ENCODE measurements at regions of chr12 and their contacts with region 1.

Region 1: DNA sequence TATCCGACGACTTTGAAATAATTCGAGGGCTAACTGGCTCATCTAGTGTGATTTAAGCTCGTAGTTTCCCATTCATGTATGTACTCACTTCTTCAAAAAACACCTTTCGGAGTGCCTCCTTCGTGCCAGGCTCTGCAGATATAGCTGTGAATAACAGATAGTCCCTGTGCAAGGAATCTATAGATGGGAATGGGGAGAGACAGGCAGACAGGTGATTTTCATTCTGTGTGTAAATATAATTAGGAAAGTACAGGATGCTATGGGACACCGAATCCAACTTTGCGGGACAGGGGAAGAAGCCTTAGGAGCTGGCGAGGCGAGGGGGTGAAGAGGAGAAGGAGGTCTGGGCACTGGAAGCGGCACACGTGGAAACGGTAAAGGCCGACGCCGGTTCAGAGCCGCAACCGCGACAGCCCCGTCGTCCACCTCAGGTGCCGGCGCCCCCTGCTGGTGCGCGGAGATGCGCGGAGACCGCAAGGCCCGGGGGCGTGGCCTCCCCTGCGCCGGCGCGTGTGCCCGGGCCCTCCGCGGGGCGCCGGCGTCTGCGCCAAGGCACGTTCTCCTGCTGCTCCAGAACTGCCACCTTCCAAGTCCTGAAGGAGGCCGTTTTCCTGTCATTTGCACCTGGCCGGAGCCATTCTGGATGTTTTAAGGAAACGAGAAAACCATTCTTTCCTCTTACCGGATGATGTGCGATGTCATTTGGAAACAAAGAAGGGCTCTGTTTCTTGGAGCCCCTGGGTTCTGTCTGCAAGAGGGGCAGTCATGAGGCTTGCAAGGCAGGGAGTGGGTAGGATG is 18.0 kb upstream of the CACNA1C start:
- DNase-seq: peak; percentile 84 to 85
- H3K4me3 ChIP-seq: no peak overlapping the region
- H3K27ac ChIP-seq: no peak overlapping the region
- H3K4me1 ChIP-seq: peaks cover 3 to 8% of the 10 kb centered on the region in 2 donors
- H3K27me3 ChIP-seq: no peaks in the 10 kb centered on the region
- CTCF ChIP-seq: peak; percentile 28 to 96 (median 88)
- POLR2A ChIP-seq: no peak

Region 2: GRCh38 chr12:1804545-1805332 is 230.1 kb before region 1 on chr12:
- intact Hi-C with region 1: loop called (anchors 10 kb)
- DNase-seq: peak; percentile 85 to 87
- H3K4me3 ChIP-seq: no peak overlapping the region
- H3K27ac ChIP-seq: no peak overlapping the region
- H3K4me1 ChIP-seq: peaks cover 0 to 4% of the 10 kb centered on the region in 2 donors
- H3K27me3 ChIP-seq: no peaks in the 10 kb centered on the region
- CTCF ChIP-seq: no peak
- POLR2A ChIP-seq: no peak